GM12878 (cell line): ENCODE measurements at regions of chr14 and their contacts with region 1.

Region 1: DNA sequence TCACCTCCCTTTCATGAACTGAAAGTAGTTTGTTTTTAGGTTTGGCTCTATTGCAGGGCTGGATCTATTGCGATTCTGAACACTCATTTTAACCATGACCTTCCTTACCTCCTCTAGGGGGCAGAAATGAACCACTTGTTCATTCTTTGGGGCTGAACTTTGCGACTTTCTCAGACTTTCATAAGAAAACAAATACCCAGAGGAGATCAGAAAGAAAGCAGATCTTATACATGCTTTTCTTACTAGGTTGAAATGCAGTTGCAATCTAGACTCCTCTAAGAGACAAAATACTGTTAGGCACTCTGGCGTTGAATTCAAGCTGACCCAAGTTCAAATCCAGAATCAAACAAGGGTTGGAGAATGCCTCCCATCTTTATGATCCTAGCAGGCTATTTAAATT is 32.6 kb upstream of the PLEKHG3 start:
- DNase-seq: no peak
- ATAC-seq: peak; percentile 54
- H3K4me3 ChIP-seq: no peak overlapping the region
- H3K27ac ChIP-seq: no peak overlapping the region
- H3K4me1 ChIP-seq: peaks cover 6% of the 10 kb centered on the region
- H3K27me3 ChIP-seq: no peaks in the 10 kb centered on the region
- CTCF ChIP-seq: peak; percentile 63 to 66 (median 66)
- EP300 ChIP-seq: no peak
- POLR2A ChIP-seq: no peak
- RAD21 ChIP-seq: peak; percentile 70

Region 2: GRCh38 chr14:64444984-64445845 is 226.4 kb before region 1 on chr14:
- CTCF ChIA-PET with region 1: no interaction called
- POLR2A ChIA-PET with region 1: no interaction called
- RAD21 ChIA-PET with region 1: no interaction called
- SMC1A ChIA-PET with region 1: no interaction called
- in situ Hi-C with region 1: no loop called
- intact Hi-C with region 1: no loop called
- DNase-seq: peak; percentile 84
- ATAC-seq: peak; percentile 99
- H3K4me3 ChIP-seq: no peak overlapping the region
- H3K27ac ChIP-seq: peak overlapping the region; percentile 97
- H3K4me1 ChIP-seq: peaks cover 22% of the 10 kb centered on the region
- H3K27me3 ChIP-seq: no peaks in the 10 kb centered on the region
- CTCF ChIP-seq: peak in 2 of 3 experiments; percentile 15 to 20; a peak in 1 of 6 replicates
- EP300 ChIP-seq: peak; percentile 75 to 77; a peak in 2 of 4 replicates
- POLR2A ChIP-seq: peak; percentile 37; the same call in 1 of the 2 replicates
- RAD21 ChIP-seq: no peak

Region 3: GRCh38 chr14:64654246-64654900 is 17.2 kb before region 1 on chr14:
- CTCF ChIA-PET with region 1: interaction called, 16 read pairs
- POLR2A ChIA-PET with region 1: no interaction called
- RAD21 ChIA-PET with region 1: interaction called, 5 read pairs
- SMC1A ChIA-PET with region 1: interaction called, 7 read pairs
- in situ Hi-C with region 1: no loop called
- intact Hi-C with region 1: no loop called
- DNase-seq: peak; percentile 27
- ATAC-seq: peak; percentile 86
- H3K4me3 ChIP-seq: no peak overlapping the region
- H3K27ac ChIP-seq: no peak overlapping the region
- H3K4me1 ChIP-seq: no peaks in the 10 kb centered on the region; the same call in 1 of the 2 replicates
- H3K27me3 ChIP-seq: no peaks in the 10 kb centered on the region
- CTCF ChIP-seq: no peak
- EP300 ChIP-seq: no peak
- POLR2A ChIP-seq: no peak
- RAD21 ChIP-seq: no peak

Region 4: DNA sequence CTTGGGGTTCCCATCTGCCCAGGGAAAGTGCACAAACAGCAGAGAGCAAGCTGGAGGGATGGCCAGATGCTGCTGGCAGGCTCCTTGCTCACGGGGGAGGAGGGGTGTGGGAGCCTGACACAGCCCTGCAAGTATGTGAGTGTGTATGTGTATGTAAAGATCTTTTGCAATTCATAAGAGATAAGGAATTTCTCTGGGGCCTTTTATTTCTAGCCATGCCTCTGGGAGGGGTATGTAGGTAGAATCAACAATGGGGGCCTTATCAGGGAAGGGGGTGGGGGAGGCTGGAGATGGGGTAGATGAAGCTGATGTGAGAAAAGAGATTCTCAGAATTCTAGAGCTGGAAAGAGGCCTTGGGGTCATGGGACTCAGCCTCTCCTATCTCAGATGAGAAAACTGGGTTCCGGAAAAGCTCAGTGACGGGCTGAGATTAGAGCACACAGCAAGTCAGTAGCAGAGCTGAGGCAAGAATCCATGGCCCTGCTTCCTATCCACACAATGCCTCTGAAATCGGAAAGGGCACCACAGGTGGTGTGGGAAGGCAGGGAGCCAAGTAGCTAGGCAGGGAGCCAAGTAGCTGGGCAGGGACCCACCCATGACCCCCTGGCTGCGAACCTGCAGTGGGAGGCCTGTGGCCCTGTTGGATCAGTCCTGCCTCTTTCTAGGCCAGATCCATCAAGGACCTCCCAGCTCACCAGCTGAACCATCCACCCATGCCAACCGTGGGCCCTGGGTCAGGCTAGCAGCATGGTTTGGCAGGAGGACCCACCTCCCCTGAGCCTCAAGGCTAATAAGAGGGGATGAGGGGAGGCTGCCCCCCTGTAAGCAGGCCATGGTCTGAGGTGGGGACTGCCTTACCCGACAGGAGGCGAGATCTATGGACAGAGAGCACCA is 87.3 kb after region 1 on chr14:
- CTCF ChIA-PET with region 1: interaction called, 69 read pairs
- POLR2A ChIA-PET with region 1: no interaction called
- RAD21 ChIA-PET with region 1: interaction called, 19 read pairs
- SMC1A ChIA-PET with region 1: interaction called, 30 read pairs
- in situ Hi-C with region 1: loop called (anchors 5 kb)
- intact Hi-C with region 1: loop called (anchors 1 kb)
- DNase-seq: no peak
- ATAC-seq: no peak
- H3K4me3 ChIP-seq: no peak overlapping the region
- H3K27ac ChIP-seq: no peak overlapping the region
- H3K4me1 ChIP-seq: no peaks in the 10 kb centered on the region
- H3K27me3 ChIP-seq: peaks cover 0 to 3% of the 10 kb centered on the region in 2 experiments; a peak in 3 of 4 replicates
- CTCF ChIP-seq: no peak
- EP300 ChIP-seq: no peak
- POLR2A ChIP-seq: no peak
- RAD21 ChIP-seq: no peak